Activated naive CD4-positive, alpha-beta T cell treated with anti-CD3 and anti-CD28 coated beads for 36 hours (primary cell): ENCODE measurements at regions of chr19 and their contacts with region 1.

Region 1: DNA sequence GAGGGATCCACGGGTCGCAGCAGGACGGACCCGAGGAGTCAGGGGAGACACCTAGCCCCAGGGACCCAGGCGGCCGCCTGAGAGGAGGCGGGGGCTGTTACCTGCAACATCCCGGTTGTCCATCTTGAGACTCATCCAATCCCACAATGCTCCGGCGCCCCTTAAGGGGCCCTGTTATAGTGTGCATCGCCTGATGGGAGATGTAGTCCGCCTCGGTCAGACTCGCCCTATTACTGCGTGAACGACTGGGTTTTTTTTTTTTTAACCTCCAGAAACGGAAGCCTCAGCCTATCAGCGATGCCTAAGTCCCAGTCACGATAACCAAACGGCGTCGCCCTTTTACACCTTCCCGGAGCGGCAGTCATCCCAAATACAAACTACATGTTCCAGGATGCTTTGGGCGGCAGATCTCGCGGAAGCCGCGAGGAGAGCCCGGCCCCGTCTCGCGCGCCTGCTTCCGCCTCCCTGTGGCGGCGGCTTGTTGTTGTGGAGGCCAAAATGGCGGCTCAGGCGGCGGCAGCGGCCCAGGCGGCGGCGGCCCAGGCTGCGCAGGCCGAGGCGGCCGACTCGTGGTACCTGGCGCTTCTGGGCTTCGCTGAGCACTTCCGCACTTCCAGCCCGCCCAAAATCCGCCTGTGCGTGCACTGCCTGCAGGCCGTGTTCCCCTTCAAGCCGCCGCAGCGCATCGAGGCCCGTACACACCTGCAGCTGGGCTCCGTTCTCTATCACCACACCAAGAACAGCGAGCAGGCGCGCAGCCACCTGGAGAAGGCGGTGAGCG is at the starts of genes MAU2 and SUGP1:
- DNase-seq: peak; percentile 94
- H3K4me3 Mint-ChIP-seq: peak within 1 kb of the TSS; percentile 93
- H3K27ac Mint-ChIP-seq: peak within 1 kb of the TSS; percentile 99
- H3K4me1 Mint-ChIP-seq: peaks cover 47% of the 10 kb centered on the region
- H3K27me3 Mint-ChIP-seq: no peaks in the 10 kb centered on the region
- total RNA-seq, gene MAU2: 38.6 to 42.5 TPM
- total RNA-seq, gene SUGP1: 31.7 to 32.4 TPM

Region 2: GRCh38 chr19:19033426-19034203 is 286.9 kb before region 1 on chr19 and contains the starts of genes ARMC6 and SUGP2:
- CTCF ChIA-PET with region 1: no interaction called
- intact Hi-C with region 1: loop called (anchors 1 kb)
- DNase-seq: peak; percentile 85
- H3K4me3 Mint-ChIP-seq: peak within 1 kb of the TSS; percentile 95
- H3K27ac Mint-ChIP-seq: peak within 1 kb of the TSS; percentile 86
- H3K4me1 Mint-ChIP-seq: peaks cover 37% of the 10 kb centered on the region
- H3K27me3 Mint-ChIP-seq: no peaks in the 10 kb centered on the region
- total RNA-seq, gene ARMC6: 24.2 to 24.6 TPM
- total RNA-seq, gene SUGP2: 149 to 154 TPM

Region 3: DNA sequence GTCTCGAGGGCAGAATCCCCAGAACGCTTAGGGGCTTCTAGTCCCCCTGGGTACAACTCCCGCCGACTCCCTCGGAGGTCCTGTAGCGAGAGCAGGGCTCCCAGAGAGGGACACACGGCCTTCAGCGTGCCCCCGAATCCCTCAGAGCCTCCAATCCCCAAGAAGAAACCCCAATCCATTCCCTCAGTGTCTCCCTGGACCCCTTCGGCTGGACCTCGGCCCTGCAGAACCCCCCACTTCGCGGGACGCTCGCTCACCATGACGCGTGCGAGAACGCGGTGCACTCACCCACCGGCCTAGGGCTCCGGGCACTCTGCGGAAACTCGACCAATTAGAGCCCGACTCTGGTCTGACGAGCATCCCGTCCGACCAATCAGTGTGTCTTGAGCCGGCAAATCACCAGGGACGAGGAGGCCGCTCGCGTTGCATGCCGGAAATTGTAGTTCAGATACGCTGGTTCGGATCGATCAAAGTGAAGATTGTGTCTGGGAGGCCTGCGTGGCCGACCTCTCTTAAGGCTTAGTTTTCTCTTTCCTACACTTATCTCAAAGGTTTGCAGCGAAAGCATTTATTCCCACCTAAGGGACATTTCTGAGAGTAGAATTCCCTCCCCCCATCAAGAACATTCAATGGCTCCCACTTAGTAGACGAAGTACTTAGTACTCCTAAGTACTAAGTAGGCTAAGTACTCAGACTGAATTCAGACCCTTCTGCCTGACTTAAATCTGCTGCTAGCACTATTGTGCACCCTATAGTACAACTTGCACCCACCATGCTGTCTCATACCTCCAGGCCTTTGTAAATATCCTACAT is 182.2 kb before region 1 on chr19 and contains the start of gene TMEM161A:
- CTCF ChIA-PET with region 1: no interaction called
- intact Hi-C with region 1: loop called (anchors 1 kb)
- DNase-seq: peak; percentile 98
- H3K4me3 Mint-ChIP-seq: peak within 1 kb of the TSS; percentile 94
- H3K27ac Mint-ChIP-seq: peak within 1 kb of the TSS; percentile 61
- H3K4me1 Mint-ChIP-seq: peaks cover 27% of the 10 kb centered on the region
- H3K27me3 Mint-ChIP-seq: no peaks in the 10 kb centered on the region
- total RNA-seq, gene TMEM161A: 18.1 to 18.3 TPM

Region 4: GRCh38 chr19:19385108-19385899 is 64.8 kb after region 1 on chr19:
- CTCF ChIA-PET with region 1: no interaction called
- intact Hi-C with region 1: loop called (anchors 1 kb)
- DNase-seq: peak; percentile 100
- H3K4me3 Mint-ChIP-seq: peak overlapping the region; percentile 84
- H3K27ac Mint-ChIP-seq: peak overlapping the region; percentile 72
- H3K4me1 Mint-ChIP-seq: peaks cover 38% of the 10 kb centered on the region
- H3K27me3 Mint-ChIP-seq: no peaks in the 10 kb centered on the region

Region 5: GRCh38 chr19:19459707-19460251 is 139.2 kb after region 1 on chr19:
- CTCF ChIA-PET with region 1: no interaction called
- intact Hi-C with region 1: loop called (anchors 1 kb)
- DNase-seq: peak; percentile 89
- H3K4me3 Mint-ChIP-seq: peak overlapping the region; percentile 76
- H3K27ac Mint-ChIP-seq: peak overlapping the region; percentile 96
- H3K4me1 Mint-ChIP-seq: peaks cover 86% of the 10 kb centered on the region
- H3K27me3 Mint-ChIP-seq: no peaks in the 10 kb centered on the region